IMR-90 (cell line): ENCODE measurements at regions of chr5 and their contacts with region 1.

Region 1: GRCh38 chr5:178732281-178732680 is 1.8 kb upstream of the ZNF354A start:
- DNase-seq: no peak
- ATAC-seq: no peak
- H3K4me3 ChIP-seq: no peak overlapping the region
- H3K27ac ChIP-seq: no peak overlapping the region
- H3K4me1 ChIP-seq: no peaks in the 10 kb centered on the region
- H3K27me3 ChIP-seq: no peaks in the 10 kb centered on the region
- CTCF ChIP-seq: no peak
- POLR2A ChIP-seq: no peak
- RAD21 ChIP-seq: no peak

Region 2: GRCh38 chr5:178626484-178627258 is 105.6 kb before region 1 on chr5 and contains the start of gene CLK4:
- CTCF ChIA-PET with region 1: interaction called, 3 read pairs
- POLR2A ChIA-PET with region 1: no interaction called
- dilution Hi-C with region 1: no loop called
- in situ Hi-C with region 1: no loop called
- intact Hi-C with region 1: loop called (anchors 5 kb)
- DNase-seq: peak; percentile 93
- ATAC-seq: peak; percentile 91
- H3K4me3 ChIP-seq: peak within 1 kb of the TSS; percentile 92
- H3K27ac ChIP-seq: peak within 1 kb of the TSS; percentile 98
- H3K4me1 ChIP-seq: peaks cover 2% of the 10 kb centered on the region; the same call in 1 of the 2 replicates
- H3K27me3 ChIP-seq: no peaks in the 10 kb centered on the region
- CTCF ChIP-seq: no peak
- POLR2A ChIP-seq: peak; percentile 73; the same call in 1 of the 2 replicates
- RAD21 ChIP-seq: no peak
- total RNA-seq, gene CLK4: 8.2 and 14.4 TPM in 2 replicates

Region 3: DNA sequence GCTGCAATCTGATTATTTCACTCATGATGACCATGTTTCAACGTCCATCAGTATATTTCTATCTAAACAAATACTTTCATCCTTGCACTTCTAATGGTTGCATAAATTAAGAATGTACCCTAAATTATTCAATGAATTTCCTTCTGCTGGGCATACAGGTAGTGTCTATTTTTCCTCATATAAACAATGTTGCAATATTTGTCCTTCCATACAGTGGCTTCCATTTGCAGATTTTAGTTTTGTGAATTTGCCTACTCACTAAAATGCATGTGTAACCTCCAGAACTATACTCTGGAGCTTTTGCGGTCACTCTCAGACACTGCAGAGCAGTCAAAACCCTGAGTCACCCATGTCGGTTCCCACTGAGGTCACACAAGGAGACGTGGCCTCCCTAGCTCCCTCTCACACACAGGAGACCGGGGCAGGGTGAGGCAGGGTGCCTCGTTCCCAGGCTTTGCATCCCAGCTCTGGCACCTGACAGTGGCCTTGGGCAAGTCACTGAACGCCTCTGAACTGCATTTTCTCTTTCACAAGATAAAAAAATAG is 53.6 kb after region 1 on chr5:
- CTCF ChIA-PET with region 1: no interaction called
- POLR2A ChIA-PET with region 1: no interaction called
- dilution Hi-C with region 1: no loop called
- in situ Hi-C with region 1: no loop called
- intact Hi-C with region 1: no loop called
- DNase-seq: no peak
- ATAC-seq: no peak; the same call in 1 of the 2 replicates
- H3K4me3 ChIP-seq: no peak overlapping the region
- H3K27ac ChIP-seq: no peak overlapping the region
- H3K4me1 ChIP-seq: no peaks in the 10 kb centered on the region
- H3K27me3 ChIP-seq: no peaks in the 10 kb centered on the region
- CTCF ChIP-seq: no peak
- POLR2A ChIP-seq: no peak
- RAD21 ChIP-seq: no peak

Region 4: DNA sequence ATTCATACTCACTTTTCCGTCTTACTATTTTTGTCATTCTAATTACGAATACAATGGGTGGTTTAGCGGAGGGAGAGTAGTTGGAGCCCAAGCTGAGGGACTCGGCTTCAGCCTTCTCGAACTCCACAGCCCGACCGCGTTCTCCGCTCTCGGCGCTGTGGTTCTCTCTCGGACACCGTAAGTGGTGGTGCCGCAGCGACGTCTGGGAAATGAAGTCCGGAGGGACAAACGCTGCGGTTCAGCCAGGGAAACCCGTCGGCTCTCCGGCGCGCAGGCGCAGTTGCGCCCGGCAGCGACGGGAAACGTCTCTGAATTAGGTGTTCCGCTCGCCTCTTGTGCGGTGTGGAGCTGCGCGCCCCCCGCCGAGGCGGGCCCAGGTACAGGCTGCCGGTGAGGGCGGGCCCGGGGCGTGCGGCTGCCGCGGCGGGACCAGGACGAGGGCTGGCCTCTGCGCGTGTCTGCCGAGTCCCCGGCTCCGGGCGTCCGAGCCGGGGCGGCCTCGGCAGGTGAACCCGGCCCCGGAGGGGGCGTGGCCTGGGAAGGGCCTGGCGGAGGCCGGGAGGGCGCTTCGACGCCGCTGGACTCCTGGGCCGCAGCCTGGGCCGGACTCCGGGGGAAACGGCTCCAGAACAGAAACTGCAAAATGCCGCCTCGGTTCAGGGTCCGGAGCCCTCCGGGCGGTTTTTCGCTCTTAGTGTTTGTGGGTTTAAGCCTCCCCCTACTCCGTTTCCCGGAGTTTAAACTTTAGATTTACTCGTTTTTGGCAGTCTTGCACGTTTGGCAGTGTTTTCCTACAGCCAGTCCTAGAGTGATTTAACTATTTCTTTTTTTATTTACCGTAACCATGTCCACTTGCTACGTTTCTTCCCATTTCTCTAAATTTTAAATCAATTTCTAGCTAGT is 291.5 kb after region 1 on chr5 and contains the start of gene ZNF879:
- CTCF ChIA-PET with region 1: no interaction called
- POLR2A ChIA-PET with region 1: no interaction called
- dilution Hi-C with region 1: no loop called
- in situ Hi-C with region 1: no loop called
- intact Hi-C with region 1: loop called (anchors 5 kb)
- DNase-seq: peak; percentile 94
- ATAC-seq: peak; percentile 99
- H3K4me3 ChIP-seq: peak within 1 kb of the TSS; percentile 73
- H3K27ac ChIP-seq: peak within 1 kb of the TSS; percentile 21
- H3K4me1 ChIP-seq: 0 out of 2 replicates have a peak, but pooled peaks cover 2% of the 10 kb centered on the region
- H3K27me3 ChIP-seq: no peaks in the 10 kb centered on the region
- CTCF ChIP-seq: no peak
- POLR2A ChIP-seq: no peak
- RAD21 ChIP-seq: no peak
- total RNA-seq, gene ZNF879: 3.3 and 3.4 TPM in 2 replicates

Region 5: GRCh38 chr5:179495906-179496455 is 763.7 kb after region 1 on chr5:
- CTCF ChIA-PET with region 1: no interaction called
- POLR2A ChIA-PET with region 1: no interaction called
- dilution Hi-C with region 1: no loop called
- in situ Hi-C with region 1: loop called (anchors 25 kb)
- intact Hi-C with region 1: loop called (anchors 1 kb)
- DNase-seq: no peak
- ATAC-seq: no peak
- H3K4me3 ChIP-seq: no peak overlapping the region
- H3K27ac ChIP-seq: no peak overlapping the region
- H3K4me1 ChIP-seq: peaks cover 2% of the 10 kb centered on the region; the same call in 1 of the 2 replicates
- H3K27me3 ChIP-seq: peaks cover 8% of the 10 kb centered on the region
- CTCF ChIP-seq: 0 out of 2 replicates have a peak, but pooled peaks have one; percentile 8
- POLR2A ChIP-seq: no peak
- RAD21 ChIP-seq: peak; percentile 11; the same call in 1 of the 2 replicates